A673 (cell line): ENCODE measurements at regions of chr7 and their contacts with region 1.

Region 1: DNA sequence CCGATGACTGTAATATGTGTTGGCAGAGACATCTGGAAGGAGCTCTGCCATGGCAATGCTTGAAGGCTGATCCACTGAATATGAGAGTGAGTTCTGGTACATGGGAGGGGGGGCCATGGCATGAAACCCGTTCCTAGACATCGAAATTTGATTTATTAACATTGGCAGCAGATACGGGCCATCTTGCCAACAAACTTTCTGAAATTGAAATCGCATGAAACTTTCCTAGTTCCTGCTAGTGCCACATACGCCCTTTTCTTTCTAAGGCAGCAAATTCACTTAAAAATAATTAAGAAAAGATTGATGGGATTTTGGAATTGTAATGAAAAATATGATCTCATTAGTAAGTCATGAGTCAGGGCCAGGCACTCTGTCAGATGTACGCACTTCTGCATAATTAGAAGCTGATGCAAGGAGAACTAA is 91.8 kb upstream of the KMT2C start:
- DNase-seq: no peak
- H3K4me3 ChIP-seq: no peak overlapping the region
- H3K27ac ChIP-seq: no peak overlapping the region
- H3K4me1 ChIP-seq: peaks cover 9% of the 10 kb centered on the region
- H3K27me3 ChIP-seq: no peaks in the 10 kb centered on the region
- CTCF ChIP-seq: no peak

Region 2: DNA sequence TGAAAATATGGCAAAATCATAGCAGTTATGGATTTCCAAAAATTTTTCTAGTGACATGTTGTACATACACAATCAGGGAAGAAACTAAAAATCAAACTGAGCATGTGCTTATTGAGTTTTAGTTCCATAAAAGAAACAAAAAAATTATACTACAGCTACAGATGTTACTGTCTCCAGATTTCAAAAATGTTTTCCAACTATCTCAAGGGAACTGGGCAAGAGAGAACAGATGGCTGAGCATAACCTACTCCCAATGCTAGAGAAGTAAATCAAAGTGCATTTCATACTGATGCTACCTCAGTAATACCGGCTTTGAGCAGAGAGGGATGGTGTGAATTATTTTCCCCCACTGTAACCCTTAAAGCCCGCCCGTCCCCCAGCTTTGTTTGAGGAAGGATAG is 51.1 kb before region 1 on chr7:
- CTCF ChIA-PET with region 1: no interaction called
- POLR2A ChIA-PET with region 1: no interaction called
- intact Hi-C with region 1: no loop called
- DNase-seq: no peak
- H3K4me3 ChIP-seq: no peak overlapping the region
- H3K27ac ChIP-seq: no peak overlapping the region
- H3K4me1 ChIP-seq: no peaks in the 10 kb centered on the region
- H3K27me3 ChIP-seq: no peaks in the 10 kb centered on the region
- CTCF ChIP-seq: no peak

Region 3: GRCh38 chr7:152512706-152513105 is 14.9 kb before region 1 on chr7:
- CTCF ChIA-PET with region 1: no interaction called
- POLR2A ChIA-PET with region 1: interaction called, 12 read pairs
- intact Hi-C with region 1: no loop called
- DNase-seq: no peak
- H3K4me3 ChIP-seq: no peak overlapping the region
- H3K27ac ChIP-seq: no peak overlapping the region
- H3K4me1 ChIP-seq: no peaks in the 10 kb centered on the region
- H3K27me3 ChIP-seq: no peaks in the 10 kb centered on the region
- CTCF ChIP-seq: no peak